Prostate gland (tissue), 2 donors: ENCODE measurements at regions of chr3 and their contacts with region 1.

Region 1: GRCh38 chr3:34683851-34684250 is 885.4 kb downstream of the PDCD6IP start:
- DNase-seq: peak; percentile 57
- H3K4me3 ChIP-seq: no peak overlapping the region
- H3K27ac ChIP-seq: no peak overlapping the region
- H3K4me1 ChIP-seq: no peaks in the 10 kb centered on the region
- H3K27me3 ChIP-seq: no peaks in the 10 kb centered on the region
- CTCF ChIP-seq: peak in 3 of 4 experiments; percentile 55 to 62 (median 60)
- POLR2A ChIP-seq: no peak

Region 2: GRCh38 chr3:33883538-33883950 is 800.3 kb before region 1 on chr3:
- intact Hi-C with region 1: loop called (anchors 5 kb)
- DNase-seq: no peak
- H3K4me3 ChIP-seq: no peak overlapping the region
- H3K27ac ChIP-seq: no peak overlapping the region
- H3K4me1 ChIP-seq: peaks cover 3% of the 10 kb centered on the region
- H3K27me3 ChIP-seq: no peaks in the 10 kb centered on the region
- CTCF ChIP-seq: peak; percentile 35 to 80 (median 74)
- POLR2A ChIP-seq: no peak

Region 3: GRCh38 chr3:33980252-33980651 is 703.6 kb before region 1 on chr3:
- intact Hi-C with region 1: loop called (anchors 5 kb)
- DNase-seq: peak; percentile 39
- H3K4me3 ChIP-seq: no peak overlapping the region
- H3K27ac ChIP-seq: no peak overlapping the region
- H3K4me1 ChIP-seq: no peaks in the 10 kb centered on the region
- H3K27me3 ChIP-seq: peaks cover 3% of the 10 kb centered on the region
- CTCF ChIP-seq: peak in 3 of 4 experiments; percentile 20 to 50 (median 33)
- POLR2A ChIP-seq: no peak

Region 4: DNA sequence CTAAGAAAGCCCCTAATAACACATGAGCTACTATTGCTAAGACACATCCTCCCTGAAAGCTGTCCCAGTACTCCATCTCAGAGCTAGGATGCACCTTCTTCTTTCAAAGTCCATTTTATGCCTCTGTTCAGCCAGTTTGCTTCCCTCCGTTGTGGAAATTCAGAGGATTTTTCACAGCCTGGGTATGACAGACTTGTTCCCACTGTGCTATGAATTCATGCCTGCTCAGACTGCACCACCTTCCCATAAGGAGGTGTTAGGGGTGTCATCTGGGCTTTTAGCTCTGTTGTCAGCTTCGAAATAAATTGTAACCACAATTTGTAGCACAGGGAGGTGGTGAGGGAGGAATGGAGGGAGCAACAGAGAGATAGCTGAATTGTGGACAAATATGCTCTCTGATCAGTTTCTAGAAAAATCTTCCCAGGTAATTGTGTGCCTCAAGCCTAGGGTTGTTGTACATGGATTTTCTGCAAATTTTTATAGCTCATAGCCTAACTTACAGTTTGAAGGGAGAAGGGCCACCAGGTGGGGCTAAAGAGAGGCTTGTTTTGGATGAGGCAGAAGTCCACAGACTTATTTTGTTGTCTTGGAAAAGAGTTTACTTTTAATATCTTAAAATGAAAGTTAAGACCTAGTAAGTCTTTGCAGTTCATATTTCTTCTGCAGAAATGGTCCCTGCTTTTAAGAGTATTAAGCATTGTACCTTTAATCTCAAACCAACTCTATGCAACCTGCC is 423.4 kb before region 1 on chr3:
- intact Hi-C with region 1: loop called (anchors 5 kb)
- DNase-seq: peak; percentile 40
- H3K4me3 ChIP-seq: no peak overlapping the region
- H3K27ac ChIP-seq: no peak overlapping the region
- H3K4me1 ChIP-seq: no peaks in the 10 kb centered on the region
- H3K27me3 ChIP-seq: no peaks in the 10 kb centered on the region
- CTCF ChIP-seq: peak; percentile 38 to 54 (median 48)
- POLR2A ChIP-seq: no peak

Region 5: DNA sequence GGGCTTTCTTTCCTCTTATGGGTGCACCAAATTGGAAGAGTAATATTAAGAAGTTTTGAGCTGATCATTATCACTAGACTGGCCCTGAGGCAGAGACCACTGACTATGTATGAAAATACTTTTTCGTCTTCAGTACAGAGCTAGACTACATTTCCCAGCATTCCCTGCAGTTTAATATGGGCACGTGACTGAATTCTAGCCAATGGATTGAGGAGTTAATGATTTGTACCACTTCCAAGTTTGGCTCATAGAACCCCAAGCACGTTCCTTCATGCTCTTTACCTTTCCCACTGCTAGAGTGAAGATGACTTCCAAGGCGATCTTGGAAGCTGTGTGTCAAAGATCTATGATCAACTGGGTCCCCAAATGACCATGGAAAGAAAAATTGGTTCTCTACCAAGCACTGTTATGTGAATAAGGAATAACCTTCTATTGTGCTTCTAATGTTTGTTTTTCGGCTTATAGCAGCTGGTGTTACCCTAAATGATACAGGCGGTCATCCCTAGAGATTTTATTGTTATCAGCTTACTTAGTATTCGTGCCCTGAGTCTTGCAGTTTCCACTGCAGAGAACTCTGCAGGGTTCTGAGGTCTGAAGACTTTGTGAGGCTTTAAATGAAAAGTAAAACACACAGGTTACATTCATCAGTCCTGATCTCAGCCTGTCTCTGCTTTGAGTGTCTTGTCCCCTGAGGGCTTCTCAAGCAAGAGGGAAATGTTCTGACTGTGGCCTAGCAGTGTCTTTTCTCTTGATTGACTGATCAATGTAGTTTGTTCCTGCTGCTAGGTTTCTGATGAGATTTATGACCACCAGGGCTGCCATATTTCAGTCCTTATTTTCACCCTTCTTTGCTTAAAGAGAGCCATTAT is 398.7 kb before region 1 on chr3:
- intact Hi-C with region 1: no loop called
- DNase-seq: no peak
- H3K4me3 ChIP-seq: no peak overlapping the region
- H3K27ac ChIP-seq: no peak overlapping the region
- H3K4me1 ChIP-seq: no peaks in the 10 kb centered on the region
- H3K27me3 ChIP-seq: no peaks in the 10 kb centered on the region
- CTCF ChIP-seq: no peak
- POLR2A ChIP-seq: no peak

Region 6: DNA sequence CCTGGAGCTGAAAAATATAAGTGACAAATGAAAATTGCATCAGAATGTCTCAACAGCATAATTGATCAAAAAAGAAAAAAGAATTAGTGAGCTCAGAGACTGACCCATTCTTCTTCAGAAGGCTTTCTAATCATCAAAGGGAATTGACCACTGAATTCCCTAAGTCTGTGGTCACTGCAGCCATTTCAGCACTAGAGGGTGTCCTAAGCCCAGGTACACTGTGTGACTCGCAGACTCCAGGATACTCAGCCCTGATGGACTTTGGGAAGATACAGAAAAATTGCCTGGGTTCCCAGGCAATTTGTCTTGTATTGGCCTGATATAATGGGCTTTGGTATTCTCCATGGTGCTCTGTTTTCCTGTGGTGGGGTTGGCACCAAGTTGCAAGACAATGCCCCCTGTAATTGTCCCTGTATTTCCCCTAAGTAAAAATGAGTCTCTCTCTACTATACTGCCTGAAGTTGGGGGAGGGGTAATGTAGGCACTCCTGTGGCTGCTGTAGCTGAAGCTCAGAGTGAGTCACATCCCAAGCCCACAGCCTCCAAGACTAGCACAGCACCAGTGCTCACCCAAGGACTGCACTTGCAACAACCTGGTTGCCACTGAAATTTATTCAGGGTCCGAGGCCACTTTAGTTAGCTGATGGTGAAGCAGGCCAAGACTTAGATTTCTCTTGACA is 1440.4 kb after region 1 on chr3:
- intact Hi-C with region 1: no loop called
- DNase-seq: no peak
- H3K4me3 ChIP-seq: no peak overlapping the region
- H3K27ac ChIP-seq: no peak overlapping the region
- H3K4me1 ChIP-seq: no peaks in the 10 kb centered on the region
- H3K27me3 ChIP-seq: no peaks in the 10 kb centered on the region
- CTCF ChIP-seq: peak in 2 of 4 experiments; percentile 19 to 25
- POLR2A ChIP-seq: no peak